ENCODE measurements at regions of chr11 and their contacts with region 1.

Region 1: GRCh38 chr11:3797329-3798095 is at the start of gene NUP98:
- DNase-seq: peak; percentile 100
- H3K4me3 ChIP-seq: peak within 1 kb of the TSS; percentile 70 to 95 (median 91)
- H3K27ac ChIP-seq: peak within 1 kb of the TSS; percentile 94 to 99
- H3K4me1 ChIP-seq: peaks cover 9 to 35% (median 26%) of the 10 kb centered on the region in 4 experiments
- H3K27me3 ChIP-seq: no peaks in the 10 kb centered on the region

Region 2: GRCh38 chr11:3786781-3787428 is 10.6 kb before region 1 on chr11:
- CTCF ChIA-PET with region 1: interaction called, 15 read pairs
- POLR2A ChIA-PET with region 1: interaction called, 10 read pairs
- DNase-seq: peak in 1 of 3 donors; percentile 31
- H3K4me3 ChIP-seq: peak overlapping the region in 3 of 7 experiments; percentile 13 to 50 (median 19)
- H3K27ac ChIP-seq: peak overlapping the region; percentile 35 to 85
- H3K4me1 ChIP-seq: peaks cover 30 to 83% (median 56%) of the 10 kb centered on the region in 4 experiments
- H3K27me3 ChIP-seq: no peaks in the 10 kb centered on the region

Region 3: DNA sequence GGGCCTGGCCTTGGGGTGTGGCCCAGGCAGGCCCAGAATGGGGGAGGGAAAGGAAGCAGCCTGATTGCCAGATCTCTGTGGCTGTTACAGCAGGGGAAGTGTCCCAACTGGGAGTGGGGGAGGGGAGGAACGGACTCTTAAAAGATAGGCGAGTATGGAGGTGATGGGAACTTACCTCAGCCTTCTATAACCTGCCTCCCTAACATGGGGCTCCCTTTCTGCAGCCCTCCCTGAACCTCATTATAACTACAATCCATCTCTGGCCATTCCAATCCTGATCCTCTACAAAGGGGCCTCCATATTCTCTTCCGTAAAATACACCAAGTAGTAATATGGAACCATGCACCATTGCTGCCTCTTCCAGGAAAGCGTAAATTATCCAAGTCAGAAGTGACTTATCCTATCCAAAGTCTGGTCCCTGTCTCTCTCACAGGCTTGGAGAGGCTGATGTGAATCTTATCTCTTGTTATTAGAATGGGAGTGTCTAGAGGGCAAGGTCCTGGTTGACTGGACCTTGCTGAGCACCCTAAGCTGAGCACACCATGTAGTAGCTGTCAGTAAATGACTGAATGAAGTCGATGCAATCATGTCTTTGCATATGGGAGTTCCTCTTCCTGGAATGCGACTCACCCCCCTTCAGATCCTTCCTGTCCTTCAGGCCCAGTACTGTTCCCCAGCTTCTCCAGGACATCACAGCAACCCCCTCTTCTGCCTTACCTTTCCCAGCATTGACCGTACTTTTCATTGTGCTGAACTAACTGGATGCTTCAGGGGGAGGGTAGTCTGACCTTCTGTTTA is 37.4 kb after region 1 on chr11:
- CTCF ChIA-PET with region 1: no interaction called
- POLR2A ChIA-PET with region 1: no interaction called
- DNase-seq: peak; percentile 56 to 74 (median 68)
- H3K4me3 ChIP-seq: peak overlapping the region in 6 of 7 experiments; percentile 26 to 65 (median 49)
- H3K27ac ChIP-seq: peak overlapping the region; percentile 58 to 77
- H3K4me1 ChIP-seq: peaks cover 60 to 98% (median 94%) of the 10 kb centered on the region in 4 experiments
- H3K27me3 ChIP-seq: no peaks in the 10 kb centered on the region